Caco-2 (cell line): ENCODE measurements at regions of chr1 and their contacts with region 1.

Region 1: DNA sequence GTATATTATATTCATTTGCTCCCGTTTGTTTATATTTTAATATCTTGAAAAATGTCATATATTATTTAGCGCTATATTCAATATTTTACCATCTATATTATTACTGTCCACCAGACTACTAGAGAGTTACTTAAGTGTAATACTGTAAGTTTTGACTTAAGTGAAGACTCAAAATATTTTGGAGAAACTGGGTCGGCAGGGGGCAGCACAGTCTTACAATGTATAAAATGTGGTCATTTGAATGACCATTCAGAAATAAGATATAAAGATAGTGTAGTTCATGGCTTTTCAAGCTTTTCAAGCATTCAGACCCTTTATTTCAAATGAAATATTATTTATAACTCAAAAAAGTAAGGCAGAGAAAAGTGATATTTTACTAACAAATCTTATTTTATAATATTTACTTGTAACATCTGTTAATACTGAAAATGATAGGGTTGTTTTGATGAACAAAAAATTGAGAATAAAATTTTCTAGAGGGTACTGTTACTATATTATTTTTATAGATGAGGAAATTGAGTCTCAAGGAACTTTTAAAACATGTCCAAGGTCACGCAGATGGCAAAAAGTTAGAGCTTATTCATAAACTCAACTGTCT is 89.0 kb upstream of the SERTAD4 start:
- DNase-seq: peak; percentile 66 to 77
- H3K4me3 ChIP-seq: no peak overlapping the region
- H3K4me3 Mint-ChIP-seq: no peak overlapping the region
- H3K27ac Mint-ChIP-seq: no peak overlapping the region
- H3K4me1 ChIP-seq: no peaks in the 10 kb centered on the region
- H3K4me1 Mint-ChIP-seq: no peaks in the 10 kb centered on the region
- H3K27me3 ChIP-seq: no peaks in the 10 kb centered on the region
- H3K27me3 Mint-ChIP-seq: no peaks in the 10 kb centered on the region
- CTCF ChIP-seq: peak; percentile 63 to 69

Region 2: GRCh38 chr1:210024996-210025395 is 118.6 kb before region 1 on chr1:
- CTCF ChIA-PET with region 1: interaction called, 3 read pairs
- POLR2A ChIA-PET with region 1: no interaction called
- intact Hi-C with region 1: loop called (anchors 10 kb)
- DNase-seq: no peak
- H3K4me3 ChIP-seq: no peak overlapping the region
- H3K4me3 Mint-ChIP-seq: no peak overlapping the region
- H3K27ac Mint-ChIP-seq: no peak overlapping the region
- H3K4me1 ChIP-seq: no peaks in the 10 kb centered on the region
- H3K4me1 Mint-ChIP-seq: no peaks in the 10 kb centered on the region
- H3K27me3 ChIP-seq: no peaks in the 10 kb centered on the region
- H3K27me3 Mint-ChIP-seq: no peaks in the 10 kb centered on the region
- CTCF ChIP-seq: no peak

Region 3: DNA sequence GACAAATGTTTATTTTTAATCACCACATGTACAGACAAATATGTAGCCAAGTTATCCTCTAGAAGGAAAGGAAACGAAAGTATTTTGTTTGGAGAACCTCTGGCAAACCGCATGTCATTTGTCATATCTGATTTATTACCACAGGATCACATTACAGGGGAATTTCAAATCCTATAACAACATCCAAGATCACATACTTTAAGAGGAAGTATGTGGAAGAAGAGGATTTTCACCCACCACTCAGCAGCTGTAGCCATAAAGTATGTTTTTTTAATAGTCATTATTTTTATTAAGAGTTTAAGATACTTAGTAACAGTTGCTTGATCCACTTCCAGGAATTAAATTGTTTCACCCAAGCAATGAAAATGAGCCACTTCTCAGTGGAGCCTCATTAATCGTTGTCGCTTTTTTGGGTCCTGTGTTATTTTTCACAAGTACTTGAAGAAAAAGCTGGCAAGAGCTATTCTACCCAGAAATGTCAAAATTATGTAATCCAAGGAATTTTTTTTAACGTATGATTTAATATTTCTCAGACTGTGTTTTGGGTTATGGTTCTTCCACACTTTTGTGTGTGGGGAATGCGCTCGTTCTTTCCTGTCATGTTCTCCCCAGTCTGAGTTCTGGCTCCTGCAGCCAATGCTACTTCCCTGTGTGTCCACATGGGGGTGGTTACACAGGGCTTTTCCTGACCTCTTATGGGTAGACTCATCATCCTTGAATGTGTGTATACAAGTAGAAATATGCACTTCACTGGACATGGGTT is 96.0 kb after region 1 on chr1:
- CTCF ChIA-PET with region 1: no interaction called
- POLR2A ChIA-PET with region 1: no interaction called
- intact Hi-C with region 1: loop called (anchors 1 kb)
- DNase-seq: peak; percentile 49 to 57
- H3K4me3 ChIP-seq: no peak overlapping the region
- H3K4me3 Mint-ChIP-seq: no peak overlapping the region
- H3K27ac Mint-ChIP-seq: no peak overlapping the region
- H3K4me1 ChIP-seq: no peaks in the 10 kb centered on the region
- H3K4me1 Mint-ChIP-seq: peaks cover 8% of the 10 kb centered on the region
- H3K27me3 ChIP-seq: no peaks in the 10 kb centered on the region
- H3K27me3 Mint-ChIP-seq: no peaks in the 10 kb centered on the region
- CTCF ChIP-seq: peak; percentile 65 to 70

Region 4: GRCh38 chr1:210292231-210292871 is 148.8 kb after region 1 on chr1:
- CTCF ChIA-PET with region 1: no interaction called
- POLR2A ChIA-PET with region 1: no interaction called
- intact Hi-C with region 1: loop called (anchors 1 kb)
- DNase-seq: peak; percentile 71 to 84
- H3K4me3 ChIP-seq: peak overlapping the region; percentile 37
- H3K4me3 Mint-ChIP-seq: peak overlapping the region; percentile 73
- H3K27ac Mint-ChIP-seq: peak overlapping the region; percentile 54
- H3K4me1 ChIP-seq: no peaks in the 10 kb centered on the region
- H3K4me1 Mint-ChIP-seq: peaks cover 6% of the 10 kb centered on the region
- H3K27me3 ChIP-seq: no peaks in the 10 kb centered on the region
- H3K27me3 Mint-ChIP-seq: no peaks in the 10 kb centered on the region
- CTCF ChIP-seq: peak; percentile 23 to 67

Region 5: DNA sequence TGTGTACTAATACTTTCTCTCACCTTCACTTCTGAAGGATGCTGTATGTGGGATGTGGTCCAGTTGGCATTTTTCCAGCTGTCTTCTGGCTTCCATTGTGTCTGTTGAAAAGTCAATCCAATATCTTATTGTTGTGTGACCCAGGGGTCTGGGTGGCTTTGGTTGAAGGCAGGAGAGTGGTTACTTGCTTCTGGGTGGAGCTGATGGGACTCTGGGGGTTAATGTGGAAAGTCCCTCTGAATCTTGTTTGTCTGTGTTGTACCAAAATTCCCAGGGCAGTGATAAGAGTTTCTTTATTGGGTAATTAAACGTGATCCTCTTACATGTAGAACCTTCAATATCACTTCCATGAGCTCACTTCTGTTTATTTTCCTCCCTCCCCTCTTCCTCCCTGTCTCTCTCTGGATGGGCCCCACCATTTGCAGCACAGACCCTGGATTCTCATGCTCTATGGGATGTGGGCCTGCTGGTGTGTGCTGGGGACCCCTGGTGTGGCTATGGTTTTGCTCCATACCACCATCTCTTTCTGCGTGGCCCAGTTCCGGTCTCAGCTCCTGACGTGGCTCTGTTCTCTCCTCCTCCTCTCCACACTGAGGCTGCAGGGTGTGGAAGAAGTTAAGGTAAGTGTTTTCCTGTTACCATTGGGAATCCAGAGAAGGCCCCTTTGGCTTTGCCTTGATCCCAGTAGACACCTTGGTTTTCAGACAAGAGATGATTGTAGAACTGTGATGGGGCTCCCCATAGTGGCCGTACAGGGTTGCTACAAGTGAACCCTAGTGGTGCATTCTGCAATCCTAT is 256.7 kb after region 1 on chr1:
- CTCF ChIA-PET with region 1: no interaction called
- POLR2A ChIA-PET with region 1: no interaction called
- intact Hi-C with region 1: loop called (anchors 1 kb)
- DNase-seq: peak; percentile 71 to 79
- H3K4me3 ChIP-seq: no peak overlapping the region
- H3K4me3 Mint-ChIP-seq: no peak overlapping the region
- H3K27ac Mint-ChIP-seq: peak overlapping the region; percentile 62
- H3K4me1 ChIP-seq: no peaks in the 10 kb centered on the region
- H3K4me1 Mint-ChIP-seq: peaks cover 14% of the 10 kb centered on the region
- H3K27me3 ChIP-seq: no peaks in the 10 kb centered on the region
- H3K27me3 Mint-ChIP-seq: no peaks in the 10 kb centered on the region
- CTCF ChIP-seq: peak; percentile 83 to 92